GM13976 (cell line): ENCODE measurements at regions of chr16 and their contacts with region 1.

Region 1: GRCh38 chr16:21708533-21709115 is 44.9 kb downstream of the OTOA start:
- DNase-seq: peak; percentile 78
- CTCF ChIP-seq: peak; percentile 67

Region 2: GRCh38 chr16:21599233-21600030 is 109.2 kb before region 1 on chr16 and contains the start of gene METTL9:
- in situ Hi-C with region 1: loop called (anchors 25 kb)
- DNase-seq: peak; percentile 96
- CTCF ChIP-seq: no peak

Region 3: GRCh38 chr16:22710326-22710725 is 1001.7 kb after region 1 on chr16:
- in situ Hi-C with region 1: no loop called
- DNase-seq: no peak
- CTCF ChIP-seq: no peak

Region 4: DNA sequence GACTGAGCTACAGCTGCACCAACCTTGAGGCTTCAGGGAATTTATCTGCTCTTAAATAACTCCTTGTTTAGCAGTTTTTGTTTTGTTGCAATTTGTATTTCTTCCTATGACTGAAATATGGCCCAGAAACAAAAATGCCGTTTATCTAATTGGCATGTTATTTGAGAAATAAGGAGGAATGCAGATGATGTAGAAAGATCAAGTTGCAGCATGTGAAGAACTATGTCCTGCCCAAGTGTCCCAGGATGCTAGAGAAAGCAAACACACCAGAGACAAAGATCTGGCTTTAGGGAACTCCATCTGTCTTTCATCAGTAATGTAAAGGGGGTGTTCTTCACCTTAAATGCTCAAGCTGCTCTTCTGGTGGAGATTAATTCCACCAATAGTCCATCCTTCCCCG is 1410.9 kb after region 1 on chr16:
- in situ Hi-C with region 1: no loop called
- DNase-seq: no peak
- CTCF ChIP-seq: no peak